ENCODE measurements at regions of chr7 and their contacts with region 1.

Region 1: DNA sequence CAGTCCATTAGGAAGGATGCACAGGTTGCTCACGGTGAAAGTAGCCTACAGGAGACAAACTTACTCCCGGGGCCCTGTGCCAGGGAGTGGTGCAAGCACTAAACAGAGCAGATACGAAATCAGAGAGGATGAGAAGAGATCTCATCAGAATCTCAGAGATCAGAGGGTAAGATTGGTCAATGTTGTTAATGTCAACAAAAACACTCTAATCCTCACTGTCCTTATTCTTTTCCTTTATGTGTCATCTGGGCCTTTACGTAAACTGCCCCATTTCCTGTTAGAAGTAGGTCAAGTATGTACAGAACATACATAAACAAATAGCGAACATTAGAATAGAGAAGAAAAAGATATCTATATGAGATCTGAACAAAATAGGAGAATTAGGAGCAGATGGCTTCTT is 163.1 kb downstream of the PPP1R17 start:
- DNase-seq: no peak
- H3K4me3 ChIP-seq: no peak overlapping the region
- H3K27me3 ChIP-seq: no peaks in the 10 kb centered on the region
- CTCF ChIP-seq: no peak

Region 2: GRCh38 chr7:31705377-31705776 is 144.7 kb before region 1 on chr7:
- CTCF ChIA-PET with region 1: no interaction called
- POLR2A ChIA-PET with region 1: no interaction called
- DNase-seq: no peak
- H3K4me3 ChIP-seq: no peak overlapping the region
- H3K27me3 ChIP-seq: no peaks in the 10 kb centered on the region
- CTCF ChIP-seq: no peak

Region 3: DNA sequence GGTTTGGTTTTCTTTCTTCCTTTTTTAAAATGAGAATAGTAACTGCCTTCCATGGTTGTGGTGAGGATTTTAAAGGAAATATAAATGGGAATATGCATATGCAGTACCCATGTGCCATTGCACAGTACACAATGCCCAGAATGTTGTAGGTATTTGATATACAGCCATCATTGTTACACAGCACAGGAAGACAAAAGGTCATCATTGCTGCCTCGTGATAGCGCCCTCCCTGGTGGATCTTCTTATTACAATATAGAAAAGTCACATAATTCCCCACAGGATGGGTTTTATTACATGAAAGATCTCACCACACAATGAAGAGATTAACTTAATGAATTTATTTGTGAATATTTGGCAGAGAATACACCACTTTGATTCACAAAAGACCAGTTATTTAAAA is 86.5 kb before region 1 on chr7:
- CTCF ChIA-PET with region 1: no interaction called
- POLR2A ChIA-PET with region 1: interaction called, 13 read pairs
- DNase-seq: no peak
- H3K4me3 ChIP-seq: no peak overlapping the region
- H3K27me3 ChIP-seq: no peaks in the 10 kb centered on the region
- CTCF ChIP-seq: peak; percentile 31

Measured in BJ (cell line).